MCF 10A (cell line): ENCODE measurements at regions of chr14 and their contacts with region 1.

Region 1: GRCh38 chr14:100424504-100425418 is 101.6 kb downstream of the SLC25A47 start:
- DNase-seq: peak; percentile 18
- H3K4me3 Mint-ChIP-seq: no peak overlapping the region
- H3K27ac Mint-ChIP-seq: peak overlapping the region; percentile 36
- H3K4me1 Mint-ChIP-seq: peaks cover 25% of the 10 kb centered on the region
- H3K27me3 Mint-ChIP-seq: no peaks in the 10 kb centered on the region
- CTCF ChIP-seq: no peak

Region 2: DNA sequence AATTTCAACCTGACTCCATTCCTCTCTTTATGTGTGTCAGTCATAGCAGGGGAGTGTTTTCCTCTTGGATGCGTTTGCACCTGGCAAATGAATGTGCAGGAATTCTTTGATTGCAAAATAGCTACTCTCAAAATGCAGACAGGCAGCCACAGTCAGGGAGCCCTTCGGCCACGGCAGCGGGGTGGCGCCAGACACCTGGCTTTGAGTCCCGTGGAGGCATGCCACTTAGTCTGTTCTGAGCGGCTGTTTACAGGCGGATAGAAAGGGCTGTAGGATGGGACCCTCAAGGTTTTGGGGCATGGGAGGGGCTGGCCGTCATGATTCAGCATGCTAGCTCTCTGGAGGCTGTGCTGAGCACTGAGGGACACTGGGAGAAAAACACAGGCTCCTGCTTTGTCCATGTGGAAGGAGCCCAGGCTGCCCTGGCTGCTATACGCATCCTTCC is 15.4 kb after region 1 on chr14:
- CTCF ChIA-PET with region 1: interaction called, 5 read pairs
- POLR2A ChIA-PET with region 1: interaction called, 10 read pairs
- intact Hi-C with region 1: no loop called
- DNase-seq: peak; percentile 89
- H3K4me3 Mint-ChIP-seq: peak overlapping the region; percentile 48
- H3K27ac Mint-ChIP-seq: peak overlapping the region; percentile 87
- H3K4me1 Mint-ChIP-seq: peaks cover 23% of the 10 kb centered on the region
- H3K27me3 Mint-ChIP-seq: no peaks in the 10 kb centered on the region
- CTCF ChIP-seq: peak; percentile 85